ENCODE measurements at regions of chr7 and their contacts with region 1.

Region 1: DNA sequence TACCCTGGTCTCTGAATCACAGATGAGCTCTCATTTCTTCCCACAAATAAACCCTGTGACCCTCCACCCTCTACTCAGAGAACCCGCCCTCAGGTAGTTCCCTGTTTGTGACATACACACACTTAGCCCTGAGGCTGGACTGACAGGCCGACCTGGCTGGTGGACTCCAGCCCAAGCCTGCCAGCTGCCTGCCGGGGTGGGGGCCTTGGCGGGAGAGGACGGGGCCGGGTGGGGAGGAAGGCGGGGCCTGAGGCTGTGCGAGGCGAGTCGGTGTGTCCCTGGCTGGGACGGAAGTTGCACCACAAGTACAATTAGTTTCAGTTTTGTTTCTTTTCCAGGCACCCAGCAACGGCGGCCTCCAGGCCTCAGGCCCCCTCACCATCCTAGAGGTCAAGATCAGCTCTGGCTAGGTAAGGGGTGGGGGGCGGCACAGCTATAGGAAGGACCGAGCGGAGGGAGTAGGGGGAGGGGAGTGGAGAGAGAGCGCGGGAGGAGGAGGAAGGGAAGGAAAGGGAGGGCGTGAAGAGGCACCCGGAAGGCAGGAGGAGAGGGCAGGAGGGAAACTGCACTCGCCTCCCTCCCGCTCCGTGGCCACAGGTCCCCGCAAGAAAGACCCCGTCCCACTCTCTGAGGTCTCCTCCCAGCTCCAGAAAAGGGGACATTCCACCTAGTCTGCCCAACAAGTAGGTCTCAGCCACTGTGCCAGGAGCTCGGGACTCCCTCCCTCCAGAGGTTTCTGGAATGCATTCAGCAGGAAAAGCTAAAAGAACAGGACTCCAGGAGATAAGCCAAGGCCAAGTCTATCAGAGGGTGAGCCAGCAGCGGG is at the start of gene TRIM56:
- DNase-seq: peak; percentile 88
- ATAC-seq: peak; percentile 90
- H3K4me3 Mint-ChIP-seq: peak within 1 kb of the TSS; percentile 94
- H3K27ac Mint-ChIP-seq: peak within 1 kb of the TSS; percentile 98
- H3K4me1 Mint-ChIP-seq: peaks cover 26% of the 10 kb centered on the region
- H3K27me3 Mint-ChIP-seq: no peaks in the 10 kb centered on the region
- total RNA-seq, gene TRIM56: 35.3 to 40.8 TPM

Region 2: DNA sequence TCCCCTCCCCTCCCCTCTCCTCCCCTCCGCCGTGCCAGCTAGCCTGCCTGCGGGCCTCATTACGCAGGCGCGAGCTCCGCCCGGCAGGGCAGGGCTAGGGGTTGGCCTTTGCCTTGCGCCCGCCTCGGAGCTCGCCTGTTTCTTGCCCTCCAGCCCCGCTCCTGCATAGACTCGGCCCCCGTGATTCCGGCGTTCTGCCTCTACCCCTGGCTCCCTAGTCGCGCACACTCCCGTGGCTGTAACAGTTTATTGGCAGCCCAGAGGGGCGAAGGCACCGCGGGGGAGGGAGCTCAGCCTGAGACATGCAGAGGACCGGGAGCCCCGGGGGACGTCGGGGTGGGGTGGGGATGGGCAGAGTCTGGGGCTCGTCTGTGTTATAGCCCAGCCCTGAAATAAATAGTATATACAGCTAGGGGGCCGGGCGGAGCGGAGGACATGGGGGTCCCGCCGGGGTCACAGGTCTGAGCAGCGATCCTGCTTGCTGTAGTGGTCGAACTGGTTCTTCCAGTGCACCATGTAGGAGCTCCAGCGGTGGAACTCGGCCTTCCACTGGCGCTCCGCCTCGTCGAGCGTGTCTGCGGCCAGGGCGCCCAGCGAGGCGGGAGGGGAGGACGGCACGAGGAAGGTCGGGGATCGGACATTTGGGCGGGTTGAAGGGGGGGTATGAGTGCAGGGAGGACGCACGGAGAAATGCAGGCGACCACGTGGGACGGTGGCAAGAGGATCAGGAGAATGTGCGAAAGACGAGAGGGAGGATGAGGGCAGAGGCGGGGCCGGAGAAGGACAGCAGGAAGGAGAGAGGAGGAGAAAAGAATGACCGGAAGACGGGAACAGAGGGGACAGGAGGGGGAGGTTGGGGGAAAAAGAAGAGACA is 195.4 kb before region 1 on chr7:
- CTCF ChIA-PET with region 1: interaction called, 4 read pairs
- POLR2A ChIA-PET with region 1: no interaction called
- intact Hi-C with region 1: loop called in 1 of 2 experiments (anchors 2 kb)
- DNase-seq: peak; percentile 96
- ATAC-seq: peak; percentile 95
- H3K4me3 Mint-ChIP-seq: peak overlapping the region; percentile 77
- H3K27ac Mint-ChIP-seq: no peak overlapping the region
- H3K4me1 Mint-ChIP-seq: peaks cover 38% of the 10 kb centered on the region
- H3K27me3 Mint-ChIP-seq: peaks cover 14% of the 10 kb centered on the region

Region 3: DNA sequence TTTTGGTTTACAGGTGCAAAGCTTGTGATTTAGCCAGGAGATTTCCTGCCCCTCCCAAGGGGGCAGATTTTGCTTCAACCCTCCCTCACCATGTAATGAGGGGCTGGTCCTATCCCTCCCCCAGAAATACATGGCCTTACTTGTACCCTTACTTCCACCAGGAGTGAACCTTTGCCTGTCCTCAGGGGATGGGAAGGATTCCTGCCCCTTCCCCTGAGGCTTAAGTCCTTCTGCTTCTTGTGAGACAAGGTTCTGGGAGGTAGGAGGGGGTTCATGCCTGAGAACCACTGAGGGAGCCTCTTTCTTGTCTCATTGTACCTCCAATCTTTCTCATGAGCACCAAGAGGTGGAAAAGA is 155.6 kb before region 1 on chr7:
- CTCF ChIA-PET with region 1: no interaction called
- POLR2A ChIA-PET with region 1: no interaction called
- intact Hi-C with region 1: no loop called
- DNase-seq: no peak
- ATAC-seq: no peak
- H3K4me3 Mint-ChIP-seq: no peak overlapping the region
- H3K27ac Mint-ChIP-seq: no peak overlapping the region
- H3K4me1 Mint-ChIP-seq: no peaks in the 10 kb centered on the region
- H3K27me3 Mint-ChIP-seq: peaks cover 8% of the 10 kb centered on the region

Region 4: GRCh38 chr7:101244375-101245146 is 159.2 kb after region 1 on chr7 and contains the start of gene FIS1:
- CTCF ChIA-PET with region 1: interaction called, 3 read pairs
- POLR2A ChIA-PET with region 1: no interaction called
- intact Hi-C with region 1: loop called (anchors 1 to 2 kb)
- DNase-seq: peak; percentile 97
- ATAC-seq: peak; percentile 96
- H3K4me3 Mint-ChIP-seq: peak within 1 kb of the TSS; percentile 97
- H3K27ac Mint-ChIP-seq: peak within 1 kb of the TSS; percentile 97
- H3K4me1 Mint-ChIP-seq: peaks cover 25% of the 10 kb centered on the region
- H3K27me3 Mint-ChIP-seq: no peaks in the 10 kb centered on the region
- total RNA-seq, gene FIS1: 70.5 to 92.6 TPM

Region 5: DNA sequence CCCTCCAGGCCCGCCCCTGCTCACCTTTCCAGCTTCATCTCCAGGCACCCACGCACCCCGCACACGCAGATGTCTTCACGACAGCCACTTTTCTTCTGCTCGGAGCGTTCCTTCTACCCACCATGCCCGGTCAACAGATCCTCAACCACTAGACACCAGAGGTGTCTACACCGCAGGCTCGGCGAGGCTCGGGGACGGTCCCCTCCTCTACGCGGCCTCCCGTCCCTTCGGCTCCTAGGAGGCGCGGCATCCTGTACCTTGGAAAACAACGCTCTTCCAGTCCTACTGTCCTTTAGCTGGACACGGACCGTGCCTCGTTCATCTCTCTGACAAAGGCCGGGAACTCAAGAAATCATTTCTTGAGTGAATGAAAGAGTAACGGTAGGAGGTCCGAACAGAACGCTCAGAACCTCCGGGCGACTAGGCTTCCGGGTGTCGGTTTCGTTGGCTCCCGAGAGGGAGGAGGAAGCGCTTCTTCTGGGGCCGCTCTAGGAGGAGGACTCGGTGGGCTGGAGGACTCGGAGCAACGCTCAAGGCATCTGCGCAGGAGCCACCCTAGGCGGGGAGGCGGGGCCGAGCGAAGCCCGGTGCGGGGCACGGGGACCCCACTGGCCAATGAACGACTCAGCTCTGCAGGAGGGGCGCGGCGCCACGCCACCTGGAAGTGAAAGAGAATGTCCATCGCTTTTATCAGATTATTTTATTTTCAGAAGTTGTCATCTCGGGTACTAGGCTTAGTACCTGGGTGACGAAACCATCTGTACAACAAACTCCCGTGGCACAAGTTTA is 166.7 kb after region 1 on chr7:
- CTCF ChIA-PET with region 1: no interaction called
- POLR2A ChIA-PET with region 1: no interaction called
- intact Hi-C with region 1: loop called (anchors 1 kb)
- DNase-seq: peak; percentile 99
- ATAC-seq: peak; percentile 100
- H3K4me3 Mint-ChIP-seq: peak overlapping the region; percentile 96
- H3K27ac Mint-ChIP-seq: peak overlapping the region; percentile 96
- H3K4me1 Mint-ChIP-seq: peaks cover 26% of the 10 kb centered on the region
- H3K27me3 Mint-ChIP-seq: peaks cover 5% of the 10 kb centered on the region